Stomach (tissue), 19 donors: ENCODE measurements at regions of chr14 and their contacts with region 1.

Region 1: GRCh38 chr14:29548948-29549370 is 378.7 kb downstream of the PRKD1 start:
- DNase-seq: peak in 1 of 2 donors; percentile 75
- H3K4me3 ChIP-seq: no peak overlapping the region
- H3K27ac ChIP-seq: no peak overlapping the region
- H3K4me1 ChIP-seq: peaks cover 0 to 3% (median 0%) of the 10 kb centered on the region in 4 donors
- H3K27me3 ChIP-seq: no peaks in the 10 kb centered on the region
- CTCF ChIP-seq: peak in 5 of 7 experiments; percentile 31 to 72 (median 49)
- EP300 ChIP-seq: no peak
- POLR2A ChIP-seq: no peak

Region 2: GRCh38 chr14:29643433-29644211 is 94.7 kb after region 1 on chr14:
- intact Hi-C with region 1: no loop called
- DNase-seq: peak in 1 of 2 donors; percentile 30
- H3K4me3 ChIP-seq: no peak overlapping the region
- H3K27ac ChIP-seq: no peak overlapping the region
- H3K4me1 ChIP-seq: peaks cover 0 to 10% (median 0%) of the 10 kb centered on the region in 4 donors
- H3K27me3 ChIP-seq: no peaks in the 10 kb centered on the region
- CTCF ChIP-seq: no peak
- EP300 ChIP-seq: no peak
- POLR2A ChIP-seq: no peak

Region 3: GRCh38 chr14:30005114-30005808 is 456.3 kb after region 1 on chr14:
- intact Hi-C with region 1: loop called (anchors 5 kb)
- DNase-seq: peak in 1 of 2 donors; percentile 80
- H3K4me3 ChIP-seq: no peak overlapping the region
- H3K27ac ChIP-seq: no peak overlapping the region
- H3K4me1 ChIP-seq: peaks cover 0 to 5% (median 2%) of the 10 kb centered on the region in 4 donors
- H3K27me3 ChIP-seq: no peaks in the 10 kb centered on the region
- CTCF ChIP-seq: peak in 5 of 7 experiments; percentile 59 to 68 (median 63)
- EP300 ChIP-seq: no peak
- POLR2A ChIP-seq: no peak

Region 4: GRCh38 chr14:30204431-30204980 is 655.5 kb after region 1 on chr14:
- intact Hi-C with region 1: loop called (anchors 10 kb)
- DNase-seq: no peak
- H3K4me3 ChIP-seq: no peak overlapping the region
- H3K27ac ChIP-seq: no peak overlapping the region
- H3K4me1 ChIP-seq: no peaks in the 10 kb centered on the region
- H3K27me3 ChIP-seq: no peaks in the 10 kb centered on the region
- CTCF ChIP-seq: no peak
- EP300 ChIP-seq: no peak
- POLR2A ChIP-seq: no peak